ENCODE measurements at regions of chr13 and their contacts with region 1.

Region 1: DNA sequence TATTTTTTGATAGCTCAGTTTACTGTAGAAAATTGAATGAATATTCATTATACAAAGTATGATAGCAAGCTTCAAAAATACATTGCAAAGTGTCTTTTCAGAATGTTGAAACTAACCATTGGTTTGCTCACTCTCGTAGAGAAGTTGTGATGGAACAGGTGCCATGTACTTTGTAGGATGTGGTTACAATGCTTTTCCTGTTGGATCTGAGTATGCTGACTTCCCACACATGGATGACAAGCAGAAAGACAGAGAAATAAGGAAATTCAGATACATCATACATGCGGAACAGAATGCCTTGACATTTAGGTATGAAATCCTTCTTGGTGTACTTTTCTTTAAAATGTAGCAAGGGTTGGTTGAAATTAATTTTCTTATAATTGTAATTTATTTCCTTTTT is 30.5 kb downstream of the CDADC1 start:
- DNase-seq: no peak
- ATAC-seq: no peak
- H3K4me3 ChIP-seq: no peak overlapping the region
- H3K27ac ChIP-seq: no peak overlapping the region
- H3K4me1 ChIP-seq: peaks cover 3% of the 10 kb centered on the region; the same call in 1 of the 3 replicates
- CTCF ChIP-seq: no peak
- EP300 ChIP-seq: no peak
- POLR2A ChIP-seq: no peak
- RAD21 ChIP-seq: no peak

Region 2: DNA sequence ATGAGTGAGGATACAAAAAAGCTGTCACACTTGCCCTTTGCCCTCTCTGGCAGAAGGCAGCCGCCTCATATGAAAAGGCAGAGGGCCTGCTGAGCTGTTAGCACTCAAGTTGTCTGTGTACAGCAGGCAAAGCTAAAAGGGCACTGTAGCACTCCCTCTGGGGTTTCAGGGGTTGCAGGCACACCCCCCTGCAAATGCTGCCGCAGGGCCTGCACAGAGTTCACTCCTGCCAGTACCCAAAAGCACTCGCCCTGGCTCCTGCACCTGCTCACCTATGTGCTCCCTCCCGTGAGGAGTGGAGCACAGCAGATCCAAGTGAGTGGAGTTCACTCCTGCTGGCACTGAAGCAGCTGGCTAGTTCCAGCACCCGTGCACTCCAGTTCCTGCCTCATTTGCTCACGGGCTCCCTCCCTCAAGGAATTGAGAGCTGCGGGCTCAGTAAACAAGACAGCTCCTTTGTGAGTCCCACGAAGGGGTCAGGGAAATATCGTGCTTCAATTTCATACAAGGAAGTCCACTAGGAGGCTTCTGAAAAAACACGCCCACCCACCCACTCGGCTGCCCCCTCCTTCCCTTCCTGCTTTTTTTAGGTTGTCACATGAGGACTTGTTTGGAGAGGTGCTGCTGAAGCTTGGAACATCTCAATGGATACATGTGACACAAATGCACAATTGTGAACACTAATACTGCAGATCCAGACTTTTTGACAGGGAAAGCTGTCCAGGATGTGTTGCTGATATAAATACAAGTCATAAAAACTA is 735.5 kb before region 1 on chr13:
- CTCF ChIA-PET with region 1: no interaction called
- POLR2A ChIA-PET with region 1: no interaction called
- DNase-seq: no peak
- ATAC-seq: no peak; a peak in 1 of 6 replicates
- H3K4me3 ChIP-seq: no peak overlapping the region
- H3K27ac ChIP-seq: no peak overlapping the region
- H3K4me1 ChIP-seq: no peaks in the 10 kb centered on the region
- CTCF ChIP-seq: no peak
- EP300 ChIP-seq: no peak
- POLR2A ChIP-seq: no peak
- RAD21 ChIP-seq: no peak

Region 3: GRCh38 chr13:49295244-49295643 is 17.0 kb after region 1 on chr13:
- CTCF ChIA-PET with region 1: interaction called, 14 read pairs
- POLR2A ChIA-PET with region 1: no interaction called
- DNase-seq: no peak
- ATAC-seq: no peak
- H3K4me3 ChIP-seq: no peak overlapping the region
- H3K27ac ChIP-seq: no peak overlapping the region
- H3K4me1 ChIP-seq: no peaks in the 10 kb centered on the region
- CTCF ChIP-seq: no peak
- EP300 ChIP-seq: no peak
- POLR2A ChIP-seq: no peak
- RAD21 ChIP-seq: no peak

Region 4: GRCh38 chr13:49620170-49620621 is 342.0 kb after region 1 on chr13:
- CTCF ChIA-PET with region 1: no interaction called
- POLR2A ChIA-PET with region 1: no interaction called
- DNase-seq: no peak
- ATAC-seq: no peak
- H3K4me3 ChIP-seq: no peak overlapping the region
- H3K27ac ChIP-seq: no peak overlapping the region
- H3K4me1 ChIP-seq: peaks cover 2% of the 10 kb centered on the region; the same call in 1 of the 3 replicates
- CTCF ChIP-seq: no peak
- EP300 ChIP-seq: no peak
- POLR2A ChIP-seq: no peak
- RAD21 ChIP-seq: no peak

Measured in A549 (cell line).